PC-3 (cell line): ENCODE measurements at regions of chr6 and their contacts with region 1.

Region 1: DNA sequence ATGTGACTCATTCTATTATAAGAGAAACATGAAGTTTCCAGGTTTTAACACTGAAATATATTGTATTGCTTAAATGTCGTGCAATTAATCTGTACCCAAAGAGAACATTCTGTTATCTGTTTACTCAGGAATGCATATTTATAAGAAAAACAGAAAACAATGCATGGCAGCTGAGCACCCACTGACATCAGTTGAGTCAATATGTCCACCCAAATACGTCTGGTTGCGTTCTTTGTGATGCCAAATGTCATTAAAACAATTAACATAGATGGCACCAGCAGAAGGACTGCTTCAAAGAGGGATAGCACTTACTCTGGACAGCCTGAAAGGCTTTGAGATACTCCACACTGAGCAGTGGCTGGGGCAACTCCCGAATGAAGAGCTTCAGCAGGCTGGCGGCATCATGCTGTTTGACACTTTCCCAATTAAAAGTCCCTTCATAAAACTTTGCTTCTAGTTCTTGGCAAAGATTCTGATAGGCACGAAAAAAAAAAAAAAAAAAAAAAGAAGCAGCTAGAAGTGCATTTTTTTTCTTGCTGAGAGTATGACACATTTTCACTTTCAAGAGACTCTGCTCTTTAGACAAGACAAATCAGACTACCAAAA is 102.3 kb downstream of the ARHGAP18 start:
- DNase-seq: no peak
- ATAC-seq: no peak
- H3K4me3 ChIP-seq: no peak overlapping the region
- H3K27ac ChIP-seq: no peak overlapping the region
- H3K4me1 ChIP-seq: no peaks in the 10 kb centered on the region
- H3K27me3 ChIP-seq: no peaks in the 10 kb centered on the region
- CTCF ChIP-seq: no peak

Region 2: DNA sequence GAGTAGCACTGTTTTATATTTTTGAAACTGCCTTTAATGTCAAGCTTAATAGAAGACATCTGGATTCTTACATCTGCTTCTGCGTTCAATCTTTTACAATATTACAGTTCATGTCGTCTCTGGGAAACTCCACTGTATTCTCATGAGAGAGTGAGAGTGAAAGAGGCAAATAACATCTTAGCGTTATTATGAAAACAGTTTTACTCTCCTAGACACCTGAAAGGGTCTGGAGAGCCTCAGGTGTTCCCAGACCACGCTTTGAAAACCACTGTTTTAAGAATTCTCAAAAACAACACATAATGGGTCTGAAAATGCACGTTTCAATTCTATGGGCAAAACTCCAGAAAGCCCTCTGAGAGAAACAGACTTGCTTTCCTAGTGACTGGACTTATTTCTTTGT is 39.0 kb after region 1 on chr6:
- CTCF ChIA-PET with region 1: no interaction called
- POLR2A ChIA-PET with region 1: no interaction called
- intact Hi-C with region 1: no loop called
- DNase-seq: no peak
- ATAC-seq: no peak
- H3K4me3 ChIP-seq: no peak overlapping the region
- H3K27ac ChIP-seq: no peak overlapping the region
- H3K4me1 ChIP-seq: peaks cover 24% of the 10 kb centered on the region
- H3K27me3 ChIP-seq: no peaks in the 10 kb centered on the region
- CTCF ChIP-seq: no peak

Region 3: GRCh38 chr6:129764761-129765407 is 157.2 kb after region 1 on chr6:
- CTCF ChIA-PET with region 1: interaction called, 13 read pairs
- POLR2A ChIA-PET with region 1: no interaction called
- intact Hi-C with region 1: no loop called
- DNase-seq: no peak
- ATAC-seq: no peak
- H3K4me3 ChIP-seq: no peak overlapping the region
- H3K27ac ChIP-seq: no peak overlapping the region
- H3K4me1 ChIP-seq: 0 out of 2 replicates have a peak, but pooled peaks cover 3% of the 10 kb centered on the region
- H3K27me3 ChIP-seq: no peaks in the 10 kb centered on the region
- CTCF ChIP-seq: no peak